Activated CD4-positive, alpha-beta T cell treated with anti-CD3 and anti-CD28 coated beads for 36 hours (primary cell): ENCODE measurements at regions of chr20 and their contacts with region 1.

Region 1: GRCh38 chr20:50165684-50166554 is 12.4 kb upstream of the PEDS1 start:
- DNase-seq: peak; percentile 95
- ATAC-seq: peak; percentile 100
- H3K4me3 Mint-ChIP-seq: peak overlapping the region; percentile 58
- H3K27ac Mint-ChIP-seq: peak overlapping the region; percentile 72
- H3K4me1 Mint-ChIP-seq: peaks cover 13% of the 10 kb centered on the region
- H3K27me3 Mint-ChIP-seq: peaks cover 5% of the 10 kb centered on the region

Region 2: DNA sequence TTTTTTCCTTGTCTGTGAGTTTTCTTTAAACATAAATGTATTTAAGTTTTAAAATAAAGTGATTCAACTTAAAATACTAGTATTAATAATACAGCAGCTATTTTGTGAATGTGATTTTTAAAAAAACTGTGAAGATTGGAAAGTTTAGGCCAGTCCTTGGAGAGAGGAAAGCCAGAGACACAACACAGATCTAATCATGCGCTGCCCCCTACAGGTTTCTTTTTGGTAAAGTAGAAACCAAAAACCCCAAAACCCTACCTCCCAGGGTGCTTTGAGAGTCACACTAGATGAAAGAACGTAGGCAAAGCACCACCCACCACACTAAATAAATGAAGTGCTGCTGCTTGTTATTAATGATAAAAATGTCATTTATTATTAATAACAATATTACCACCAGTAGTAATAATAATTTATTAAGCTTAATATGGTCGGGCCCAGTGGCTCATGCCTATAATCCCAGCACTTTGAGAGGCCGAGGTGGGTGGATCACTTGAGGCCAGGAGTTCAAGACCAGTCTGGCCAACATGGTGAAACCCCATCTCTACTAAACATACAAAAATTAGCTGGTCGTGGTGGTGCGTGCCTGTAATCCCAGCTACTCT is 319.6 kb before region 1 on chr20:
- CTCF ChIA-PET with region 1: no interaction called
- POLR2A ChIA-PET with region 1: no interaction called
- intact Hi-C with region 1: loop called in 1 of 2 experiments (anchors 5 kb)
- DNase-seq: peak; percentile 67
- ATAC-seq: peak; percentile 81
- H3K4me3 Mint-ChIP-seq: no peak overlapping the region
- H3K27ac Mint-ChIP-seq: no peak overlapping the region
- H3K4me1 Mint-ChIP-seq: peaks cover 7% of the 10 kb centered on the region
- H3K27me3 Mint-ChIP-seq: no peaks in the 10 kb centered on the region

Region 3: DNA sequence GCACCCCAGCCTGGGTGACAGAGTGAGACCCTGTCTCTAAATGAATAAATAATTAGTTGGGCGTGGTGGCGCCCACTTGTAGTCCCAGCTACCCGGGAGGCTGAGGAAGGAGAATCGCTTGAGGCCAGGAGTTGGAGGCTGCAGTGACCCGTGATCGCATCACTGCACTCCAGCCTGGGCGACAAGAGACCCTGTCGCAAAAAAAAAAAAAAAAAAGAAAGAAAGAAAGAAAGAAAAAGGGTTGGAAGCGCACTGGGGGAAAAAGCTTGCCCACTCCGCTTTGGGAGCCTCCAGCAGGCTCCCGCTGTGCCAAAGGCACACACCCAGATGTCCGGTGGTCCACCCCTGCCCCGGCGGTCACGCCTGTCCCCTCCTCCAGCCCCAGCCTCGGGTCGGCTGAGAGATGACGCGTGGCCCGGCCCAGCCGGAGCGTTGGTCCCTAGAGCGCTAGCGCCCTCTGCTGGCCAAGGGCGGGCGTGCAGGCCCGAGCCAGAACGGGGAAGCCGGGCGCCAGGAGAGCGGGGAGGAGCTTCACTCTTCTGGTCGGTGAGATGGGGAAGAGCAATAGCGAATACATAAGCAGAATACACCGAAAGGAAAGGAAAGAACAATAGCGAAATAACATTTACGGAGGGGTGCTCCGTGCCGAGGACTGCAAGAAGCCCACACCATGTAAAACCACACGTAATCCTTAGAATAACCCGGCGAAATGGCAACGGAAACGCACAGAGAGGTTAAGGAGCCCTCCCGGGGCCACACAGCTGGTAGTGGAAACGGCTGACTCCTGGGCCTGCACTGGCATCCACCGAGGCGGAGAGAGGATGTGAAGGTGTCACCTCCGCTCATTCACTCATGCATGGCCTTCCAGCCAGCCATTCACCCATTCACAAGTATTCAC is 94.7 kb before region 1 on chr20:
- CTCF ChIA-PET with region 1: interaction called, 14 read pairs
- POLR2A ChIA-PET with region 1: no interaction called
- intact Hi-C with region 1: loop called in 1 of 2 experiments (anchors 1 kb)
- DNase-seq: peak; percentile 95
- ATAC-seq: peak; percentile 99
- H3K4me3 Mint-ChIP-seq: peak overlapping the region; percentile 61
- H3K27ac Mint-ChIP-seq: no peak overlapping the region
- H3K4me1 Mint-ChIP-seq: peaks cover 4% of the 10 kb centered on the region
- H3K27me3 Mint-ChIP-seq: no peaks in the 10 kb centered on the region

Region 4: DNA sequence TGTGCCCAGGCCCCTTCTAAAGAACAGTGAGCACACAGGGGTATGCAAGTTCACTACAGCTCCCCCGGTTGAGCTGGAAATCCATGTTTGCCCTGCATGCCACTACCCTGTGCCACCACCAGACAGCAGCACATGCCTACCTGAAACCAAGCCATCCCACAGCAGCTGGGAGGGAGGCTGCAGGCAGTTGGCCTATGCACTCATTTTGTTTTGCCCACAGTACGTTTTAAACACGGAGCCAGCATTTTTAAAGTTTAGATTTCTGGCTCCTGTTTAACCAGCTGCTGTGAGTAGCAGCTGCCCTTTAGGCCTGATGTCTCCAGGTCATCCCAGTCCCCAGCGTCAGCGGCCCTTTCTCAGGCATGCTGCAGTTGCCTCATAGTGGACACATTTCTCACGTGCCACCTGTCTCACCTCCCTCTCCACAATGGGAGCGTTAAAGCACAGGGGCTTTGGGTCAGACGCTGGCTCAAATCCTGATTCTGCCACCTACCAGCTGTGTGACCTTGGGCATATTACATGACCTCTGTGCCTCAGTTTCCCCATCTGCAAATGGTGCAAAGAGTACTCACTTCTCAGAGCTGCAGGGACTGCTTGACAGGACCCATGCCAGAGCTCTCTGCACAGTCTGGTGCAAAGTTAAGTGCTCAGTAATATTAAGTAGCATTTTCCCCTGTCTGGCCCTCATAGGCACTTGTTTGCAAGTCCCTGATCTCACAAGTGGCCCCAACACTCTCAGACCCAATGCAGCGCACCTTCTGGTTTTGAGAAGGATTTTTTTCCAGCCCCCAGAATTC is 44.8 kb before region 1 on chr20:
- CTCF ChIA-PET with region 1: interaction called, 172 read pairs
- POLR2A ChIA-PET with region 1: interaction called, 6 read pairs
- intact Hi-C with region 1: loop called (anchors 1 kb)
- DNase-seq: peak; percentile 79
- ATAC-seq: peak; percentile 74
- H3K4me3 Mint-ChIP-seq: no peak overlapping the region
- H3K27ac Mint-ChIP-seq: no peak overlapping the region
- H3K4me1 Mint-ChIP-seq: peaks cover 4% of the 10 kb centered on the region
- H3K27me3 Mint-ChIP-seq: no peaks in the 10 kb centered on the region

Region 5: GRCh38 chr20:50146732-50147662 is 18.9 kb before region 1 on chr20:
- CTCF ChIA-PET with region 1: interaction called, 33 read pairs
- POLR2A ChIA-PET with region 1: interaction called, 3 read pairs
- intact Hi-C with region 1: no loop called
- DNase-seq: peak; percentile 87
- ATAC-seq: peak; percentile 99
- H3K4me3 Mint-ChIP-seq: peak overlapping the region; percentile 66
- H3K27ac Mint-ChIP-seq: peak overlapping the region; percentile 97
- H3K4me1 Mint-ChIP-seq: peaks cover 58% of the 10 kb centered on the region
- H3K27me3 Mint-ChIP-seq: no peaks in the 10 kb centered on the region

Region 6: GRCh38 chr20:50153485-50154377 is 12.2 kb before region 1 on chr20 and contains the start of gene PEDS1:
- CTCF ChIA-PET with region 1: interaction called, 33 read pairs
- POLR2A ChIA-PET with region 1: interaction called, 5 read pairs
- intact Hi-C with region 1: loop called (anchors 1 kb)
- DNase-seq: peak; percentile 91
- ATAC-seq: peak; percentile 98
- H3K4me3 Mint-ChIP-seq: peak within 1 kb of the TSS; percentile 75
- H3K27ac Mint-ChIP-seq: peak within 1 kb of the TSS; percentile 88
- H3K4me1 Mint-ChIP-seq: peaks cover 36% of the 10 kb centered on the region
- H3K27me3 Mint-ChIP-seq: no peaks in the 10 kb centered on the region
- total RNA-seq, gene PEDS1: 13.2 to 16.8 TPM

Region 7: GRCh38 chr20:50179507-50180016 is 13.6 kb after region 1 on chr20:
- CTCF ChIA-PET with region 1: interaction called, 32 read pairs
- POLR2A ChIA-PET with region 1: no interaction called
- intact Hi-C with region 1: no loop called
- DNase-seq: no peak
- ATAC-seq: no peak
- H3K4me3 Mint-ChIP-seq: no peak overlapping the region
- H3K27ac Mint-ChIP-seq: no peak overlapping the region
- H3K4me1 Mint-ChIP-seq: no peaks in the 10 kb centered on the region
- H3K27me3 Mint-ChIP-seq: peaks cover 8% of the 10 kb centered on the region